Activated CD8-positive, alpha-beta T cell treated with anti-CD3 and anti-CD28 coated beads, Interleukin-2, amount 10 ng/mL, durations not matched to agents 7 days and 5 days (primary cell): ENCODE measurements at regions of chr3 and their contacts with region 1.

Region 1: DNA sequence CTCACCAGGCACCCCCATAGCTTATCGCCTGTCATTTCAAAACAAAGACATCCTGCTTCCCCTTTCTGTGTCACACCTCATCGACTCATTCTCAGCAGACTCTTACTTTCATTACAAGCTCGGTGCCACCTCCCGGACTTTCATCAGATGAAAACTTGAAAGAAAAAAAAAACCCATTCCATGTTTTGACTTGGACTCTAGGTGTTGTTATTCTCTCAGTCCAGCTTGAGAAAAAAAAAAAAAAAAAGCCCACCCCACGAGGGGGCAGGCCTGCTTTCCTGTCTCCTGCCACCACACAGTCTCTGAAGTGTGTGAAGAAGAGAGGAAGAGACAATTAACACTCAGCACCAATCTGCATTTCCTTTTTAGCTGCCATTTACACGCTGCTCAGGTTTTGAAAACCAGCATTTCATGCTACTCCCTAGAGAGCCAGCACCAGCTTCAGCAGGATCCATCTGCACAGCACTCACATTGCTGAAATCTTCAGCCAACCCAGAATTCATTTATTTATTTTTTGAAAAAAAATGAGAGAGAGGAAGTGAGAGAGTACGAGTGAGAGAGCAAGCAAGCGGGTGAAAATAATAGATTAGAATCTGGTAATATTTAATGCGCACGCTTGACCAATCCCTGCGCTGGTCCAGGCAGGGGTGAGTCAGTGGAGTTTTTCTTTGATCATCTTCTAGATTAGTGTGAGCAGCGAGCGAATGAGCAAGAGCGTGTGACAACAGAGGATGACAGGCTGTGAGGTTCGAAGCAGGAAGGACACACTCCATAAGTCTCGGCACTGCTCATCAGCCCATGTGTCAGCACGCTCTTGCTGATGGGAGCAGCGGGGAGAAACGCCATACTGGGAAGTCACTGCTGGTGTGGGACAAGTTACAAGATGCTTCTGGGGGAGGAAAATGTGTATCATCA is 23.5 kb downstream of the ZNF80 start:
- DNase-seq: peak; percentile 80
- ATAC-seq: peak; percentile 70
- H3K4me3 Mint-ChIP-seq: no peak overlapping the region
- H3K27ac Mint-ChIP-seq: no peak overlapping the region
- H3K4me1 Mint-ChIP-seq: peaks cover 3% of the 10 kb centered on the region
- H3K27me3 Mint-ChIP-seq: no peaks in the 10 kb centered on the region

Region 2: DNA sequence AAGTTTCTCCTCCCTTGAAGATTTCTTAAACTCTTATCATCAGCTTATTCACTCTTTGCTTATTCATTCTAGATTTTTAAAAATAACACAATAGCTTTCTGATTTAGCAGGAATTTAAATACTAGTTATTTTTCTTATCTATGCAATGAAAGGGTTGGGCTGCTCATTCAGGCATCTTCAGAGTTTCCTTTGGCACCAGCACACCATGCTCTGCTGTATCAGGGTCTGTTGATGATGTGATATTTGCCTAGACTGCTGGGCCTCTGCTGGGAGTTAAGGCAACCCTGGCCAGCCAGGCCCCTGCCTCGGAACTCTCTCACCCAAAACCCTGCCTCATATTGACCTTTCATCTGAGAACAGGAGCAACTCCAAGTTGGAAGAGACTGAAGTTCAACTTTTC is 70.1 kb before region 1 on chr3:
- CTCF ChIA-PET with region 1: no interaction called
- POLR2A ChIA-PET with region 1: no interaction called
- DNase-seq: no peak
- ATAC-seq: no peak
- H3K4me3 Mint-ChIP-seq: no peak overlapping the region
- H3K27ac Mint-ChIP-seq: no peak overlapping the region
- H3K4me1 Mint-ChIP-seq: no peaks in the 10 kb centered on the region
- H3K27me3 Mint-ChIP-seq: no peaks in the 10 kb centered on the region

Region 3: GRCh38 chr3:114179575-114179974 is 34.3 kb before region 1 on chr3:
- CTCF ChIA-PET with region 1: interaction called, 10 read pairs
- POLR2A ChIA-PET with region 1: interaction called, 3 read pairs
- DNase-seq: peak; percentile 25
- ATAC-seq: peak; percentile 42
- H3K4me3 Mint-ChIP-seq: no peak overlapping the region
- H3K27ac Mint-ChIP-seq: no peak overlapping the region
- H3K4me1 Mint-ChIP-seq: peaks cover 5% of the 10 kb centered on the region
- H3K27me3 Mint-ChIP-seq: peaks cover 17% of the 10 kb centered on the region

Region 4: GRCh38 chr3:114242947-114243346 is 29.1 kb after region 1 on chr3:
- CTCF ChIA-PET with region 1: interaction called, 19 read pairs
- POLR2A ChIA-PET with region 1: interaction called, 13 read pairs
- DNase-seq: peak; percentile 57
- ATAC-seq: peak; percentile 85
- H3K4me3 Mint-ChIP-seq: no peak overlapping the region
- H3K27ac Mint-ChIP-seq: peak overlapping the region; percentile 13
- H3K4me1 Mint-ChIP-seq: peaks cover 21% of the 10 kb centered on the region
- H3K27me3 Mint-ChIP-seq: no peaks in the 10 kb centered on the region

Region 5: GRCh38 chr3:114290911-114291901 is 77.3 kb after region 1 on chr3:
- CTCF ChIA-PET with region 1: interaction called, 54 read pairs
- POLR2A ChIA-PET with region 1: interaction called, 53 read pairs
- DNase-seq: peak; percentile 92
- ATAC-seq: peak; percentile 75
- H3K4me3 Mint-ChIP-seq: peak overlapping the region; percentile 70
- H3K27ac Mint-ChIP-seq: peak overlapping the region; percentile 86
- H3K4me1 Mint-ChIP-seq: peaks cover 38% of the 10 kb centered on the region
- H3K27me3 Mint-ChIP-seq: no peaks in the 10 kb centered on the region

Region 6: DNA sequence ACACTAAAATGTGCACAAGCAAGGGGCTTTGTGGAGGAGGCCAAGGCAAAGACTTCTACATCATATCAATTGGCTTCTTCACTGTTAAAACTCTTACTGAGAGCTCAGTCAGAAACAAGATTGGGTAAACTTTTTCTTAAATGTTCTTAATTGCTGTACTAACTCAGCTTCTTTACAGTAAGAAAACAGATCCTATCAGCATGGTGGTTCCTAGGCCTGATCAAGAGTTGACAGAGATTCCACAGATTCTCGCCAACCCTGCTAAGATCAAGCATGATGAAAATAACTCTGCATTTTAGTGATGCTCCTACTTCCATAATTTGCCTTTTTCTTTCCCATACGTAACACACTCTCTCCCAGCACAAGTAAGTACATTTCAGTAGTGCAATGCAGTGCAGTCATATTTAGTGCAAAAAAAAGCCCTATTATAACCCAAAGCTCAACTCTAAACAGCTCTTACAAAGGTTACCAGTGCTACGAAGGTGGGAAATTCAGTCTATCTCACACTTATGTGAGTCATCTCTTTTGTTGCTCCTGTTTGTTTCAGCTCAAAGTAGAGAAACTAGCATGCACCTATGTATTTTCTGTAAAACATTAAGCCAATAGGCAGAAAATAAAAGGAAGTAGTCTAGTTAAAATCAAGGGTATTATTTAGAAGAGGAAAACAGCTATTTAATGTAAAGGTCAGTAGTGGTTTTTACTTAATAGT is 109.8 kb after region 1 on chr3:
- CTCF ChIA-PET with region 1: interaction called, 4 read pairs
- POLR2A ChIA-PET with region 1: interaction called, 16 read pairs
- DNase-seq: no peak
- ATAC-seq: peak; percentile 51
- H3K4me3 Mint-ChIP-seq: no peak overlapping the region
- H3K27ac Mint-ChIP-seq: peak overlapping the region; percentile 25
- H3K4me1 Mint-ChIP-seq: peaks cover 47% of the 10 kb centered on the region
- H3K27me3 Mint-ChIP-seq: no peaks in the 10 kb centered on the region

Region 7: GRCh38 chr3:114383875-114384557 is 170.1 kb after region 1 on chr3:
- CTCF ChIA-PET with region 1: interaction called, 14 read pairs
- POLR2A ChIA-PET with region 1: no interaction called
- DNase-seq: peak; percentile 79
- ATAC-seq: peak; percentile 96
- H3K4me3 Mint-ChIP-seq: peak overlapping the region; percentile 60
- H3K27ac Mint-ChIP-seq: no peak overlapping the region
- H3K4me1 Mint-ChIP-seq: peaks cover 11% of the 10 kb centered on the region
- H3K27me3 Mint-ChIP-seq: no peaks in the 10 kb centered on the region